Psoas muscle (tissue), 8 donors: ENCODE measurements at regions of chr4 and their contacts with region 1.

Region 1: DNA sequence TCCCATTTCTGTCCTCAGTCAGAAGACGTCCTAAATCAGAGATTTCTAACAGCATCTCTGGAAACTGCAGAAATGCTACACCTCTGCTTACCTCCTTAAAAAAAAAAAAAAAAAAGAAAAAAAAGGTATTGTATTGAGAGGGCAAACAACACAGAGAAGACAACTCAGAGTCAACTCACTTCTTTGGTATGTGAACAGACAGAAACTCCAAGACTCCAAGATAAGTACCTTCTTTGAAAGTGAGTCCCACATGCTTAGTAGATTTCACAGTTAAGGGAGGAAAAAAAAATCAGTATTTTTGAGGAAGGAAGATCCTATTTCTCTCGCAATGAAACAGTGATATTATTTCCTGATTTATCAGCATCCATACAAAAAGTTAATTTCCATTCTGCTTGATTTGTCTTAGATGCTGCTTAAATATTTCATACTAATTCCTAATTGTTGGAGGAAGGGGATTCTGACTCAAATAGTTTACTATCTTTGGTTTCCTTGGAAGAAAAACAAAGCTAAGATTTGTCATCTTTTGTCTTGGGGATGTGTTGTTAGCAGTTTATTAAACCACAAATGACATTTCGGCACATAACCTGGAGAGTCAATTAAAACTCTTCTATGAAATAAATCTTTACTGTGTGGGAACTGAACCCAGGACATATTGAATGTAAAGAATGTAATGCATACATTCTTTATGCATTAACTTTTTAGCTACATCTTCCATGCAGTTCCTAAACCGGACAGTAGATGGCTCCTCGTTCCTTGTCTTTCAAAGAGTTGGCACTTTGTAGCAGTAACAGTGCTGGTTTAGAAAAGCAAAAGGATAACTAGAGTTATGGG is 4.7 kb downstream of the RASGEF1B start:
- DNase-seq: no peak
- ATAC-seq: peak in 1 of 4 donors; percentile 27
- H3K4me3 ChIP-seq: no peak overlapping the region
- H3K27ac ChIP-seq: no peak overlapping the region
- H3K4me1 ChIP-seq: no peaks in the 10 kb centered on the region
- H3K27me3 ChIP-seq: no peaks in the 10 kb centered on the region
- CTCF ChIP-seq: peak; percentile 96

Region 2: GRCh38 chr4:81844717-81845116 is 377.7 kb after region 1 on chr4:
- intact Hi-C with region 1: loop called (anchors 1 to 2 kb)
- DNase-seq: peak; percentile 44 to 60
- ATAC-seq: peak; percentile 83 to 98 (median 88)
- H3K4me3 ChIP-seq: no peak overlapping the region
- H3K27ac ChIP-seq: no peak overlapping the region
- H3K4me1 ChIP-seq: no peaks in the 10 kb centered on the region
- H3K27me3 ChIP-seq: no peaks in the 10 kb centered on the region
- CTCF ChIP-seq: peak; percentile 78

Region 3: DNA sequence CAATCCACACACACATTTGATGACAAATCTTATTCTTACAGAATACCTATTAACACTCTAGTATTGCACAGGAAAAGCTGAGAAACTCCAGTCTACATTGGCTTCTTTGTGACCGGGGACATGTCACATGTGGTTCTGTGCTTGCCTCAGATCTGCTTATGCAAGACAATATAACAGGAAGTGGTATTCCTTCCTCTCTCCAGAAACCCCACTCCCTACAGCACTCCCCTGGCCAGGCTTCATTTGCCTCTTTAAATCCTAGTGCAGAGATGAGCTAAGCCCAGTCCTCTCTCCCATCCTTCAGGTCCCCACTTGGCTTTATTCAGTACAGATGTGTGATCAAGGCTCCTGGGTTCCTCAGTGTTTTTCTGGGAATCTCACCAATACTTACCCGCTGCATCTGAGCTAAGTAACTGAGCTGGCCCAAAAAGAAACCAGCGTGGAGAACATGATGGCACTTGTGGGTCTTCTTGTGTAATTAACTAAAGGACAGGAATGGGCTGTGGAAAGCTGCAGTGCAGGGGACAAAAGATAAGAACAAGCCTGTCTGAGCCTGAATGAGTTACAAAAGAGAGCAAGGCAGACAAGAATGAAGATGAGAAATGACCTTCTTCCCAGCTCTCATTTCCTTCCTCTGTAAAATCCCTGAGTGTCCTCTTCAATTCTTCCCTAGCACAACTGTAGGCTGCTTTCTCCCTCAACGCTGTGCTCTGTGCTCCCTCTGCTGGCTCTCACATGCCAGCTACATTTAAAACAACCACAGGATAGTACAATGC is 801.2 kb after region 1 on chr4:
- intact Hi-C with region 1: loop called in 1 of 2 experiments (anchors 5 kb)
- DNase-seq: peak; percentile 42 to 59
- ATAC-seq: peak; percentile 73 to 89 (median 82)
- H3K4me3 ChIP-seq: no peak overlapping the region
- H3K27ac ChIP-seq: no peak overlapping the region
- H3K4me1 ChIP-seq: no peaks in the 10 kb centered on the region
- H3K27me3 ChIP-seq: peaks cover 0 to 1% (median 0%) of the 10 kb centered on the region in 3 donors
- CTCF ChIP-seq: peak; percentile 63